BJ (cell line): ENCODE measurements at regions of chr12 and their contacts with region 1.

Region 1: GRCh38 chr12:113422030-113422885 is at the start of gene SDSL:
- DNase-seq: peak; percentile 27
- H3K4me3 ChIP-seq: peak within 1 kb of the TSS; percentile 55
- H3K27me3 ChIP-seq: peaks cover 2% of the 10 kb centered on the region; the same call in 1 of the 2 replicates
- CTCF ChIP-seq: no peak
- polyA plus RNA-seq, gene SDSL: 8.6 and 13.2 TPM in 2 replicates

Region 2: DNA sequence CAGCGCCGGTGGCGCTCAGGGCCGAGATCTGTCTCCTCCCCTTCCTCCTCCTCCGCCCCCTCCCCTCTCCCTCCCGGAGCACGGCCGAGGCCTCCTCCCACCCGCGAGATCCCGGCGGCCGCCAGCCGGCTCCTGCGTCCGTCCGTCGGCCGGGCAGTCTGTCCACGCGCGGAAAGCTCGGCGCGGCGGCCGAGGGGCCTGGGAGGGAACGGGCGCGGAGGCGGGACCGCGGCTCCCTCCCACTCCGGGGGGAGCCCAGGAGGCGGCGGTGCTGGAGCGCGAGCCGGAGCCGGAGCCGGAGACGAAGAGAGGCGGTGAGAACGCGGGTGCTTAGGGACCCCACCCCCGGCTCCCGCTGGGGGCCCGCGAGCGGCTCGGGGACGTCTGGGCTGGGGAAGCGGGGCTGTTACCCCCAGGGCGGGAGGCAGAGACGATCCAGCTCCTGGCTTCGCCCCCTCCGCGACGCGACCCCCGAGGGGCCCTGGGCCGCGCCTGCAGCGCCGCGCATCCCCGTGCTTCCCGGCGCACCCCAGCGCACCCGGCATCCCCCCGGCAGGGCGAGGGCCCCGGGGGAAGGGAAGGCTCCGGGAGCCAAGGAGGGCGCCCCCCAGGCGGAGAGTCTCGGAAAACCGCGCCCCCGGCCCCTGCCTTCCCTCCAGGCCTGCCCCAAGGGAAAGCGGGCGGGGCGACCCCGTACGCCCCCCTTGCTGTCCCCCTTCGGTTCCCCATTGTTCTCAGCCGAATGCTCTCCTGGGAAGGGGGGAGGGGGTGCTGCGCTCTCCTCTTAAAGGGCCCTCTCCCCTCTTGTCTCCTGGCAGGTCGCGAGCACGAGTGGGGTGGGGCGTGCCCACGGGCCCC is 365.4 kb before region 1 on chr12 and contains the start of gene DTX1:
- CTCF ChIA-PET with region 1: no interaction called
- POLR2A ChIA-PET with region 1: no interaction called
- DNase-seq: no peak
- H3K4me3 ChIP-seq: no peak within 1 kb of the TSS; the same call in 1 of the 2 replicates
- H3K27me3 ChIP-seq: peaks cover 25% of the 10 kb centered on the region
- CTCF ChIP-seq: no peak
- polyA plus RNA-seq, gene DTX1: not detected in 2 replicates

Region 3: DNA sequence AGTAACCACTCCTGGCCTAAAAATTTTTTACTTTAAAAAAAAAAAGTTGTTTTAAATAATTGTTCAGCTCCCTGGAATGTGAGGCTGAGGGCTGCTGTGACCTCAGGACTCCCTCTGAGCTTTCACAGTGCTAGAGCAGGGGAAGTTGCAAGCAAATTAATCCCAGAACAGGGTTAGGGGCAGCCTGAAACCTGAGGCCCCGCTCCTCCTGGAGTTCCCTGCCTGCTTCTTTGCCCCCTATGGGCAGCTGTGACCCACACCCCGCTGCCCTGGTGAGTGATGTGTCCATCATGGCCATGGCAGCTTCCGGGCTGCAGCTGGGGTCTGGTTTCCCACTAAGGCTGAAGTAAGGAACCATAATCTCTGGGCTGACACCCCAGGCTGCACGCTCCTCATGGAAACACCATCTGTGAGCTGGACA is 227.3 kb before region 1 on chr12:
- CTCF ChIA-PET with region 1: interaction called, 12 read pairs
- POLR2A ChIA-PET with region 1: no interaction called
- DNase-seq: no peak
- H3K4me3 ChIP-seq: no peak overlapping the region
- H3K27me3 ChIP-seq: no peaks in the 10 kb centered on the region
- CTCF ChIP-seq: no peak

Region 4: GRCh38 chr12:113310489-113310888 is 111.8 kb before region 1 on chr12:
- CTCF ChIA-PET with region 1: interaction called, 20 read pairs
- POLR2A ChIA-PET with region 1: no interaction called
- DNase-seq: no peak
- H3K4me3 ChIP-seq: no peak overlapping the region
- H3K27me3 ChIP-seq: no peaks in the 10 kb centered on the region
- CTCF ChIP-seq: no peak

Region 5: GRCh38 chr12:113407931-113408600 is 14.2 kb before region 1 on chr12:
- CTCF ChIA-PET with region 1: interaction called, 16 read pairs
- POLR2A ChIA-PET with region 1: no interaction called
- DNase-seq: no peak
- H3K4me3 ChIP-seq: no peak overlapping the region
- H3K27me3 ChIP-seq: peaks cover 2% of the 10 kb centered on the region; the same call in 1 of the 2 replicates
- CTCF ChIP-seq: no peak

Region 6: DNA sequence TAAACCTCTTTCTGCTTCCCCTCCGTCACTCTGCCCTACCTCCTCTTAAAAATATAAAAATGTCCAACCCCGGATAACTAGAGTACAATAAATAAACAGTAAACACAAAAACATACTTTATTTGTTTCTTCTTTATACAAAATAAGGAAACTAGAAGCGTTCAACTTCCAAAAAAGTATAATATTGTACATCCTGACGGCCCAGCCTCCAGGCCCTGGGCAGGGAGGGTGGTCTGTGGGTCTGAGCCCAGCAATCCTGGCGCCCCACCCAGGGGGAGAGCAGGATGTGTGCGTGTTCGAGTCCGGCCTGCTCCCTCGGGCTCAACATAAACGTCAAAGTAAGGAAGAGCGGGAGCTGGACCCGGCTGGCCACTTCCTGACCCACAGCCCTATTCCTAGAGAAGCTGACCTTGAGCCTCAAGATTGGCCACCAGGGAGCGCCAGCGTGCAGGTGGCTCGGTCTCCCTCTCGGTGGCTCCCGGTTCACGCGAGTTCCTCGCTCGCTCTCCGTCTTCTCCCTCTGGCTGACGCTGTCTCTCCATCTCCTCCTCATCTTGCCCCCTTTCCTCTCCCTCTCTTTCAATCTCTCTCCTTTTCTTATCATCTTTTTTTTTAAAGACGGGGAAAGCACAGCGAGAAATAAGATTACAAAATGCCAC is 40.0 kb after region 1 on chr12:
- CTCF ChIA-PET with region 1: interaction called, 12 read pairs
- POLR2A ChIA-PET with region 1: no interaction called
- DNase-seq: no peak
- H3K4me3 ChIP-seq: no peak overlapping the region; the same call in 1 of the 2 replicates
- H3K27me3 ChIP-seq: peaks cover 54% of the 10 kb centered on the region
- CTCF ChIP-seq: peak; percentile 97